ENCODE measurements at regions of chr17 and their contacts with region 1.

Region 1: GRCh38 chr17:46154151-46154816 is 38.9 kb downstream of the KANSL1 start:
- DNase-seq: peak; percentile 65
- H3K4me3 Mint-ChIP-seq: no peak overlapping the region
- H3K27ac Mint-ChIP-seq: peak overlapping the region; percentile 71
- H3K4me1 Mint-ChIP-seq: peaks cover 84% of the 10 kb centered on the region
- H3K27me3 Mint-ChIP-seq: no peaks in the 10 kb centered on the region

Region 2: GRCh38 chr17:46053911-46054534 is 100.3 kb before region 1 on chr17:
- CTCF ChIA-PET with region 1: interaction called, 4 read pairs
- POLR2A ChIA-PET with region 1: interaction called, 7 read pairs
- intact Hi-C with region 1: loop called (anchors 5 kb)
- DNase-seq: no peak
- H3K4me3 Mint-ChIP-seq: no peak overlapping the region
- H3K27ac Mint-ChIP-seq: no peak overlapping the region
- H3K4me1 Mint-ChIP-seq: peaks cover 52% of the 10 kb centered on the region
- H3K27me3 Mint-ChIP-seq: no peaks in the 10 kb centered on the region

Region 3: GRCh38 chr17:46078675-46079074 is 75.6 kb before region 1 on chr17:
- CTCF ChIA-PET with region 1: no interaction called
- POLR2A ChIA-PET with region 1: no interaction called
- intact Hi-C with region 1: no loop called
- DNase-seq: no peak
- H3K4me3 Mint-ChIP-seq: no peak overlapping the region
- H3K27ac Mint-ChIP-seq: peak overlapping the region; percentile 59
- H3K4me1 Mint-ChIP-seq: peaks cover 44% of the 10 kb centered on the region
- H3K27me3 Mint-ChIP-seq: no peaks in the 10 kb centered on the region

Region 4: GRCh38 chr17:46097497-46097896 is 56.8 kb before region 1 on chr17:
- CTCF ChIA-PET with region 1: no interaction called
- POLR2A ChIA-PET with region 1: interaction called, 3 read pairs
- intact Hi-C with region 1: loop called (anchors 2 kb)
- DNase-seq: no peak
- H3K4me3 Mint-ChIP-seq: no peak overlapping the region
- H3K27ac Mint-ChIP-seq: no peak overlapping the region
- H3K4me1 Mint-ChIP-seq: peaks cover 63% of the 10 kb centered on the region
- H3K27me3 Mint-ChIP-seq: no peaks in the 10 kb centered on the region

Region 5: DNA sequence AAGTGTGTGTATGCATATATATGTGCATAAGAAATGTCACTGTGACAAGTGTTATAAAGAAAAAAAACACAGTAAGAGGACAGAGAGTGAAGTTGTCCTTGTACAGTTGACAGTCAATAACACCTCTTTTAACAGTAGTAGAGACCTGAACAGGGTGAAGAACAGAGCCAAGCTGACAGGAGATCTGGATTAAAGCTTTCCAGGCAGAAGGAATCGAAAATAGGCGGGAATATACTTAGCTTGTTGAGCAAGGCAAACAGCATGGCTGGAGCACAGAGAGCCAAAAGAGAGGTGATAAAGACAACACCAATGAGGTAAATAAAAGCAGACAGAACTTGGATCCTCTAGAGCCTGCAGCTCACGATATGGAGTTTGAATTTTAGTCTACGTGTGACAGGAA is 25.8 kb before region 1 on chr17:
- CTCF ChIA-PET with region 1: no interaction called
- POLR2A ChIA-PET with region 1: no interaction called
- intact Hi-C with region 1: no loop called
- DNase-seq: no peak
- H3K4me3 Mint-ChIP-seq: no peak overlapping the region
- H3K27ac Mint-ChIP-seq: no peak overlapping the region
- H3K4me1 Mint-ChIP-seq: peaks cover 81% of the 10 kb centered on the region
- H3K27me3 Mint-ChIP-seq: no peaks in the 10 kb centered on the region

Region 6: DNA sequence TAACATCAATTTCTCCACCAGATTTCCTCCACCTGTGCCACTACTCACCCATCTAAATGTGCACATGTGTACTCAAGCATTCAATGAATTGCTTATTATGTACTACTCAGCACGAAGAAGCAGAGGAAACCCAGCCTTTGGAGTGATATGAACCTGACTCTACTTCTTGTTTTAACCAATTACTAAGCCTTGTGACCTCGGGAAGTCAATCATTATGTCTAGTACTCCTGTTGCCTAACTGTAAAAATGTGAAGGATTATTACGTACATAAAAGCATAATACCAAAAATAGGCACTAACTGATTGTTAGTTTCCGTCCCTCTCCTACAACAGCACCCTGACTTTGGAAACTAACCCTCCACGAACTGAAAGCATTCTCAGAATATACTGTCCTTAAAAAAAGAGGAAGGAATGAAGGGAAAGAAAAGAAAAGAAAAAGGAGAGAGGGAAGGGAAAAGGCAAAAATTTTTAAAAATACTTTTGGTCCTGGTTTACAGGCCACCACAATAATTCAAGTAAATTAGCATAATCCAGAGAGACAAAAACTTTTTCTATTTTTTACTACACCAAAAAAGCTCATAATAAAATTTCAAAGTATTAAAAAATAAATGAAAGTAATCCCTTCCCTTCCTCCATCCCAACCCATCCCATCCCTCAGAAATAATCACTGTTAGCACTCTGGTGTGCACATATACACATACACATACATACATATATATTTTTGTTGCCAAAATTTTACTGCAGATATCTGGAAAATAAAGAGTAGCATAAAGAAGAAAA is 14.7 kb before region 1 on chr17:
- CTCF ChIA-PET with region 1: interaction called, 35 read pairs
- POLR2A ChIA-PET with region 1: interaction called, 48 read pairs
- intact Hi-C with region 1: loop called (anchors 2 kb)
- DNase-seq: no peak
- H3K4me3 Mint-ChIP-seq: no peak overlapping the region
- H3K27ac Mint-ChIP-seq: no peak overlapping the region
- H3K4me1 Mint-ChIP-seq: peaks cover 92% of the 10 kb centered on the region
- H3K27me3 Mint-ChIP-seq: no peaks in the 10 kb centered on the region

Region 7: DNA sequence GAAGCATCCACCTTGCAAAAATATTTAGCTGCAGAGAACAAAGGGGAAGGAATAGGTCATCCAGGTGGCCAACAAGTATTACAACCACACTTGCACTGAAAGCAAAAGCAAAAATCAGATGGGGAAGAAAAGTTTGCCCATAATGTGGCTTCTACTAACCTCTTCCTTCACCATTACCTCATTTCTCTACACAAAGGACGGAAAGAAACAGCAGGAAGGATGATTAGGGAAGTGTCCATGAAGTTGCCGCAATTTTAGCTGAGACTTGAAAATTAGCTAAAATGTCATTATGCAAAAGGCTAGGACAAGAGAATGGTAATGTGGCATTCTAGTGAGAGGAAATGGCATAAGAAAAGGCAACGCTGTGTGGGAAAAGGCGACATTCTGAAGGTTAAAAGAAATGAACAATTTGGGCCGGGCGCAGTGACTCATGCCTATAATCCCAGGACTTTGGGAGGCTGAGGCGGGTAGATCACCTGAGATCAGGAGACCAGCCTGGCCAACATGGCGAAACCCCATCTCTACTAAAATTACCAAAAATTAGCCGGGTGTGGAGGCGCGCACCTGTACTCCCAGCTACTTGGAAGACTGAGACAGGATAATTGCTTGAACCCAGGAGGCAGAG is 25.2 kb after region 1 on chr17:
- CTCF ChIA-PET with region 1: interaction called, 5 read pairs
- POLR2A ChIA-PET with region 1: interaction called, 3 read pairs
- intact Hi-C with region 1: loop called (anchors 1 kb)
- DNase-seq: no peak
- H3K4me3 Mint-ChIP-seq: peak overlapping the region; percentile 17
- H3K27ac Mint-ChIP-seq: peak overlapping the region; percentile 30
- H3K4me1 Mint-ChIP-seq: peaks cover 78% of the 10 kb centered on the region
- H3K27me3 Mint-ChIP-seq: no peaks in the 10 kb centered on the region

Measured in activated CD4-positive, alpha-beta memory T cell treated with anti-CD3 and anti-CD28 coated beads for 36 hours (primary cell).